Cardiac septum (tissue), 1 donor: ENCODE measurements at regions of chr19 and their contacts with region 1.

Region 1: DNA sequence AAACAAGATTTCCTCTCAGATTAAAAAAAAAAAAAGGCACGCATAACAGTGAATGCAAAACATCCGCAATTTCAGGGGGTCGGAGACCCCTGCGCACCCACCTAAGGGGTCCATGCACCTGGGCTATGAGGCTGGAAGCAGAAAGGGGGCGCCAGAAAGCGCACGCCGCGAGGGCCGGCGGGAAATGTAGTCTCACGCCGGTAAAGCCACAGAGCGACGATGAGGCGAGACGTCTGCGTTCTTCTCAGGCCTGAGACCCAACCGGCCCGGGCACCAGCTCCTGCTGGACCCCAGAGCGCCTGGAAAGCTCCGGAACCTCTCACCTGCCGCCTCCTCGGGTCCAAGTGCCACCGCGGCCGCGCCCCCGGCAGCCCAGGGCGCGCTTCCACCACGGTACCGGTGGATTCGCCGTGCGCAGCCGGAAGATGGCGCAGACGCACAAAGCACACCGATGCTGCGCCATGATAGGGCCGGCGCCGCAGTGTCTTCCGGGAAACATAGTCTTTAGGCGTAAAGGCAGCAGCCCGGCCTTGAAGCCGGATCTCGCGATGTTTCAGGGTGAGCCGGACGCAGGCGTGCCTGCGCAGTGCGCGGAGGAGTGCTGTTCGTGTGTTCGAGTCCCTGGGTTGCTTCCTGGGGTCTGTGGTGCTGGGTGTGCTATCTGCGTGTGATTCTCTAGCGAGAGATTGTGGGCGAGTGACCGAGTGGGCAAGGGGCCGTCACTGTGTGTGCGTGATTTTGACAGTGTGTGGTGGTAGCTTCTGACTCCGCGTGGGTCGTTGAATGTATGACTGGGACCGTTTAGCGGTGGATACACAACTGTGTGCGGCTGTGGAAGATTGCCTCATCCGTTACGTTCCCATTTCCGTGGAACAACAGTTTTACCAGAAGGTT is at the start of gene ZNF582:
- DNase-seq: peak; percentile 95
- total RNA-seq, gene ZNF582: 4.9 TPM

Region 2: DNA sequence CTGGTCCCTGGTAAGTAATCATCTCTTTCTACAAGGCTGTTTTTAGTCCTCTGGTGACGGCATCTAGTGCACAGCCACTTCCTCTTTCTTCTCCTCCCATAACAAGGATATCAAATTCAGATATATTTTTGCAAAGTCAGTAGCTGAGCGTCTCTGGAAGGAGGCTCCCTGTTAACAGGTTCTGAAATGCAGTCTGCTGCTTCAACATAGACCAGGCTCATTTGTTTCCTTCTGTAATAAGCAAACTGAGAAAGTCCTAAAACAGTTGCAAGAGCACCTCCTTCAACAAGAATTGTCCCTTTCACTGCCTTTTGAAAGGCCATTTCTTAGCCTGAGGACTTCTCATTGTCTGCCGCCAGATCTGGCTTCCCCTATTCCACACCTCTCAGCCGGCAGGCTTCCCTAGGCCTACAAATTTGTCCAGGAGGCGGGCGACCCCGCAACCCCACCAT is 71.4 kb before region 1 on chr19:
- intact Hi-C with region 1: no loop called
- DNase-seq: no peak

Region 3: GRCh38 chr19:56333505-56333904 is 59.9 kb before region 1 on chr19:
- intact Hi-C with region 1: no loop called
- DNase-seq: no peak

Region 4: DNA sequence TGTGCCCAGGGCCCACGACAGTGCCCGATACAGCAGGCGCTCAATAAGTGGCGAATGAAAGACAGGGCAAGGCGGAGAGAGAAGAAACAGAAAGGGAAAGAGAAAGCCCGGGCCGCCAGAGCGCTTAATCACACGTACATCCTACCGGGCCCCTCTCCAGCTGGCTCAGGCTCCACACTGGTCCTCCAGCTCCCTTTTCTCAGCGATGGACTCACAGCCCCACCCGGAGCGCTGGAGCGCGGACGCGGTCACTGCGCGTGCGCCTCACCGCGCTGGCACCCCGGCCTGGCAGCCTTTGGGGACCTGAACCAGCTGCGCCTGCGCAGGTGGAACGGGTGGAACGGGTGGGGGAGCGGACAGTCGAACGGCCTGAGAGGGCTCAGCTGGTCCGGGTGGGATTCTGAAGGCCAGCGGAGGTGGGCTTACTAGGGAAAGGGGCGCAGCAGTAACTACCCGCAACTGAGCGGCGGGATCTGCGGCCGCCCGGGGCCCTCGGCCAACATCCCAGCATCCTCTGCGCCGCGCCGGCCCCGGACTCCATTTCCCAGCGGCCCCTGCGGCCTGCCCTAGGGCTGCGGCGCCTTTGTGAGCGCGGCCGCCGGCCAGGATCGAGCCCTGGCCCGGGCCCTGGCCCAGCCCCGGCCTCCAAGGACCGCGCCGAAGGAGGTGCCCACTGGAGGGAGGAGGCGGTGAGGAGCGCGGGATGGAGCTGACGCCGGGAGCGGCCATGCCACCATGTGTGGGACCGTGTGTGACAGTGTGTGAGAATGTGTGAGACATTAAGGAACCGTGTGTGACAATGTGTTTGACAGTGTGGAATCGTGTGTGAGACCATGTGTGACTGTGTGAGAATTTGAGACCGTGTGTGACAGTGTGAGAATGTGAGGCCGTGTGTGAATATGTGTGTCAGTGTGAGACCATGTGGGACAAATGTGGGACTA is 10.7 kb after region 1 on chr19 and contains the start of gene ZNF583:
- intact Hi-C with region 1: loop called (anchors 1 kb)
- DNase-seq: peak; percentile 96
- total RNA-seq, gene ZNF583: 7.3 TPM

Region 5: DNA sequence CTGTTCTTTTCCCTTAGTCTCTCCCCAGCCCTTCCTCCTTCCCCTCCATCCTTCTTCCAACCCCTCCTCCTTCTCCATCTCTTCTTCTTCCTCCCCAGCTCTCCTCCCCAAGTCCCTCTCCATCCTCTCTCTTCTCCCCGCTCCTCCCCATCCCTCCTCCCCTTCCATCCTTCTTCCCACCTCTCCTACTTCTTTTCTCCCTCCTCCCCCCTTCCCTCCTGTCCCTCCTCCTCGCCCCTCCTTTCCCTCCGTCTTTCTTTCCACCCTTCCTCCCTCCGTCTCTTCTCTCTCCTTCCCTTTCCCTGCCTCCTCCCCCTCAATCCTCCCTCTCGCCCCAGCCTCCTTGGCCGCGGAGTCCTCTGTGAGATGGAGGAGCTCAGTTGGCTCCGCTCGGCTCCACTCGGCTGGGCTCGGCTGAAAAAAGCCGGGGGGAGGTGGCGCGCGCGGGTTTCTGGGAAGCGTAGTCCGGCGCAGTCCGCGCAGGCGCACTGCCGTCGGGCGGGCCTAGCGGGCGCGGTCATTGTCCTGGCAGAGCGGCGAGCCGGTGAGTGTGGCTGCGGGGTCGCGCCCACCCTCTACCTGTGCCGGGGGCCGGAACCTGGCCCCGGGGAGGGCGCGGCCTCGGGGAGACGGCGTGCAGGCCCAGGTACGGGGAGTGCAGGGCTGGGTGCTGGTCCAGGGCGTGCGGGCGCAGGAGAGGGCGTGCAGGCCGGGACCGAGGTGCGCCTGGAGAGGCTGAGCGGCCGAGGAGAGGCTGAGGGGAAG is 201.6 kb after region 1 on chr19 and contains the start of gene ZNF71:
- intact Hi-C with region 1: no loop called
- DNase-seq: peak; percentile 92
- total RNA-seq, gene ZNF71: 7.1 TPM

Region 6: GRCh38 chr19:56671613-56671994 is 278.2 kb after region 1 on chr19 and contains the start of gene ZNF835:
- intact Hi-C with region 1: loop called (anchors 5 kb)
- DNase-seq: peak; percentile 96
- total RNA-seq, gene ZNF835: 2.6 TPM

Region 7: DNA sequence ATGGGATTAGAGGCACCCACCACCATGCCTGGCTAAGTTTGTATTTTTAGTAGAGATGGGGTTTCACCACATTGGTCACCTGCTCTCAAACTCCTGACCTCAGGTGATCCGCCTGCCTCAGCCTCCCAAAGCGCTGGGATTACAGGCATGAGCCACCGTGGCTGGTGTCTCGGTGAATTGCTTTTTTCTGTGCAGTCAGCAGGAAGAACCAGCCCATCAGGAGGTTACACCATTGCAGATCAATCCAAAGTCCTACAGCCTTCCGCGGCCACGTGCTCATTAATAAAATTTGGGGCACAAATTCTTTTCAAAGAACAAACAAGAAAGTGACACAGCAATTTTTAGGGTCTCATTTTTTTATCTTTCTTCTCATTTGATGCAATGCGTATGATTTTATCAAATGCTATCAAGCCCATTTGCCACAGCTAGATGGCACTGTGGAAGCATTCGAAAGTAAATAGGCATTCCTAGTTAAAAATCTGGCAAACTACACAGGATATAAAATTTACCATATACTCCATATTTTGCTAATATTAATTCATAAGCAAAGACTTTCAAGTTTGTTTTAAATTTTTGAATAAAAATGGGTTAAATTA is 332.6 kb after region 1 on chr19:
- intact Hi-C with region 1: loop called (anchors 10 kb)
- DNase-seq: no peak